ENCODE measurements at regions of chr12 and their contacts with region 1.

Region 1: GRCh38 chr12:6723607-6724396 is at the start of gene COPS7A:
- DNase-seq: peak; percentile 96
- H3K4me3 ChIP-seq: peak within 1 kb of the TSS; percentile 57 to 65
- H3K27ac ChIP-seq: peak within 1 kb of the TSS; percentile 84 to 87
- H3K4me1 ChIP-seq: peaks cover 0 to 9% of the 10 kb centered on the region in 2 experiments; a peak in 1 of 4 replicates
- H3K27me3 ChIP-seq: no peaks in the 10 kb centered on the region
- CTCF ChIP-seq: no peak
- EP300 ChIP-seq: no peak
- RAD21 ChIP-seq: no peak
- polyA plus RNA-seq, gene COPS7A: 191 and 231 TPM in 2 replicates

Region 2: GRCh38 chr12:6697584-6698351 is 26.0 kb before region 1 on chr12:
- CTCF ChIA-PET with region 1: no interaction called
- POLR2A ChIA-PET with region 1: interaction called, 22 read pairs
- DNase-seq: peak; percentile 75
- H3K4me3 ChIP-seq: no peak overlapping the region; a peak in 1 of 4 replicates
- H3K27ac ChIP-seq: peak overlapping the region in 1 of 2 experiments; percentile 12; a peak in 2 of 4 replicates
- H3K4me1 ChIP-seq: peaks cover 6 to 13% of the 10 kb centered on the region in 2 experiments; a peak in 2 of 4 replicates
- H3K27me3 ChIP-seq: no peaks in the 10 kb centered on the region
- CTCF ChIP-seq: peak; percentile 68
- EP300 ChIP-seq: no peak
- RAD21 ChIP-seq: peak; percentile 59

Measured in SK-N-SH (cell line).